Activated B cell treated with CpG ODN at 0.5 μM for 24 hours (primary cell): ENCODE measurements at regions of chr16 and their contacts with region 1.

Region 1: GRCh38 chr16:4734063-4734729 is at the starts of genes ANKS3 and DNAAF8:
- DNase-seq: peak; percentile 84
- ATAC-seq: peak; percentile 77
- H3K4me3 Mint-ChIP-seq: peak within 1 kb of the TSS; percentile 90
- H3K27ac Mint-ChIP-seq: peak within 1 kb of the TSS; percentile 87
- H3K4me1 Mint-ChIP-seq: peaks cover 18% of the 10 kb centered on the region
- H3K27me3 Mint-ChIP-seq: no peaks in the 10 kb centered on the region
- CTCF ChIP-seq: no peak
- total RNA-seq, gene ANKS3: 17.9 and 21.9 TPM in 2 replicates
- total RNA-seq, gene DNAAF8: 0.29 and 0.31 TPM in 2 replicates

Region 2: GRCh38 chr16:4538350-4539235 is 195.6 kb before region 1 on chr16 and contains the start of gene CDIP1:
- CTCF ChIA-PET with region 1: no interaction called
- POLR2A ChIA-PET with region 1: interaction called, 4 read pairs
- intact Hi-C with region 1: loop called (anchors 1 kb)
- DNase-seq: peak; percentile 89
- ATAC-seq: peak; percentile 91
- H3K4me3 Mint-ChIP-seq: peak within 1 kb of the TSS; percentile 76
- H3K27ac Mint-ChIP-seq: peak within 1 kb of the TSS; percentile 73
- H3K4me1 Mint-ChIP-seq: peaks cover 15% of the 10 kb centered on the region
- H3K27me3 Mint-ChIP-seq: peaks cover 1% of the 10 kb centered on the region
- CTCF ChIP-seq: no peak
- total RNA-seq, gene CDIP1: 12.5 and 12.9 TPM in 2 replicates

Region 3: GRCh38 chr16:4624015-4624826 is 110.0 kb before region 1 on chr16 and contains the start of gene MGRN1:
- CTCF ChIA-PET with region 1: interaction called, 3 read pairs
- POLR2A ChIA-PET with region 1: interaction called, 5 read pairs
- intact Hi-C with region 1: loop called (anchors 2 kb)
- DNase-seq: peak; percentile 86
- ATAC-seq: peak; percentile 90
- H3K4me3 Mint-ChIP-seq: peak within 1 kb of the TSS; percentile 99
- H3K27ac Mint-ChIP-seq: peak within 1 kb of the TSS; percentile 100
- H3K4me1 Mint-ChIP-seq: peaks cover 31% of the 10 kb centered on the region
- H3K27me3 Mint-ChIP-seq: no peaks in the 10 kb centered on the region
- CTCF ChIP-seq: peak; percentile 91
- total RNA-seq, gene MGRN1: 69.6 and 88.6 TPM in 2 replicates

Region 4: GRCh38 chr16:4693296-4693955 is 40.8 kb before region 1 on chr16 and contains the start of gene NUDT16L1:
- CTCF ChIA-PET with region 1: interaction called, 5 read pairs
- POLR2A ChIA-PET with region 1: interaction called, 27 read pairs
- intact Hi-C with region 1: loop called (anchors 1 kb)
- DNase-seq: peak; percentile 98
- ATAC-seq: peak; percentile 96
- H3K4me3 Mint-ChIP-seq: peak within 1 kb of the TSS; percentile 85
- H3K27ac Mint-ChIP-seq: peak within 1 kb of the TSS; percentile 69
- H3K4me1 Mint-ChIP-seq: peaks cover 9% of the 10 kb centered on the region
- H3K27me3 Mint-ChIP-seq: no peaks in the 10 kb centered on the region
- CTCF ChIP-seq: no peak
- total RNA-seq, gene NUDT16L1: 32.0 and 32.9 TPM in 2 replicates

Region 5: GRCh38 chr16:4766874-4767628 is 32.9 kb after region 1 on chr16 and contains the start of gene ZNF500:
- CTCF ChIA-PET with region 1: no interaction called
- POLR2A ChIA-PET with region 1: interaction called, 21 read pairs
- intact Hi-C with region 1: loop called (anchors 1 kb)
- DNase-seq: peak; percentile 97
- ATAC-seq: peak; percentile 91
- H3K4me3 Mint-ChIP-seq: peak within 1 kb of the TSS; percentile 93
- H3K27ac Mint-ChIP-seq: peak within 1 kb of the TSS; percentile 91
- H3K4me1 Mint-ChIP-seq: peaks cover 24% of the 10 kb centered on the region
- H3K27me3 Mint-ChIP-seq: no peaks in the 10 kb centered on the region
- CTCF ChIP-seq: no peak
- total RNA-seq, gene ZNF500: 14.3 and 19.1 TPM in 2 replicates

Region 6: GRCh38 chr16:4780235-4780634 is 46.0 kb after region 1 on chr16:
- CTCF ChIA-PET with region 1: no interaction called
- POLR2A ChIA-PET with region 1: no interaction called
- intact Hi-C with region 1: no loop called
- DNase-seq: no peak
- ATAC-seq: no peak
- H3K4me3 Mint-ChIP-seq: no peak overlapping the region
- H3K27ac Mint-ChIP-seq: no peak overlapping the region
- H3K4me1 Mint-ChIP-seq: no peaks in the 10 kb centered on the region
- H3K27me3 Mint-ChIP-seq: peaks cover 3% of the 10 kb centered on the region
- CTCF ChIP-seq: no peak

Region 7: DNA sequence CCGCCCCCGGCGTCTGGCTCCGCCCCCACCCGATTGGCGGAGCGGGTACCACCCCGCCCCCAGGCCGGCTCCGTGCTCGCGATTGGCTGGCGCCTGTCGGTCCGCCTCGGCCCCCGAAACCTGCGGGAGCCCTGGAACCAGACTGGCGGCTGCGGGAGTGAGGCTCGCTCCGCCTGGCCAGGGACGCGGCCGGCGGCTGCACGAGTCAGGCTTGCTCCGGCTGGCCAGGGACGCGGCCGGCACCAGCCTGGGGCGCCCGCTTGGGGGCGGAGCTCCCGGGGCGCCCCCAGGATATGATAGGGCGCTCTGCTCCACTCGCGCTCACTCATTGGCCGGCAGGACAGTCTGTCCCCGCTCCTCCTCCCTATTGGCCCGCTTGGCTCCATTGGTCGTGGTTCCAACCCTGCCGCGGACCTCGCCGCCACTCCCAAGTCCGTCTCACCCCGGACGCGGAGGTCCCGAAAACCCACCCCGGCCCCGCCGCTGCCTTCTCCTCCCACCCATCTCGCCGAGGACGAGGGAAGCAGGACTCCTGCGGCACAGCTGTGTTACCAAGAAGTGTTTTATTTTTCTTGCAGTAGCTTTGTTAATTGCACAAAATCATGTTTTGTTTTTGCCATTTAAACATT is 68.6 kb after region 1 on chr16:
- CTCF ChIA-PET with region 1: interaction called, 3 read pairs
- POLR2A ChIA-PET with region 1: interaction called, 21 read pairs
- intact Hi-C with region 1: loop called (anchors 1 kb)
- DNase-seq: peak; percentile 97
- ATAC-seq: peak; percentile 88
- H3K4me3 Mint-ChIP-seq: peak overlapping the region; percentile 86
- H3K27ac Mint-ChIP-seq: peak overlapping the region; percentile 69
- H3K4me1 Mint-ChIP-seq: peaks cover 25% of the 10 kb centered on the region
- H3K27me3 Mint-ChIP-seq: no peaks in the 10 kb centered on the region
- CTCF ChIP-seq: no peak

Region 8: DNA sequence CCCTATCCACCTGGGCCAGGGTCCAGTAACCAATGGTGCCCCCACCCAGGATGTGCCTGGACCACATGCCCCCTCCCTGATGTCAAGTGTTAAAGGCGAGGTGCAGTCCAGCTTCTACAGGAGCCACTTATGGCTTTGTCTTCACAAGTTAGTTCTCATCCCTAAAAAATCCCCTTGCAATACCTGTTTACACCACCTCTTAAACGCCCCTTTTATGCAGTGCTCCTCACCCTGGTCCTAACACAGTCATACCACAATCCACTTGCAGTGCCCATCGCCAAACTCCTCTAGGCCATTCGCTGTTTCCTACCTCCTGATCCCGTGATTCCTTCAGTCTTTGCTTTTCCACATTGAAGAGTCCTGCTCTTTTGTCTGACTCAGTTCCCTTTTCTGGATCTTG is 105.7 kb after region 1 on chr16:
- CTCF ChIA-PET with region 1: no interaction called
- POLR2A ChIA-PET with region 1: no interaction called
- intact Hi-C with region 1: no loop called
- DNase-seq: no peak
- ATAC-seq: no peak
- H3K4me3 Mint-ChIP-seq: no peak overlapping the region
- H3K27ac Mint-ChIP-seq: no peak overlapping the region
- H3K4me1 Mint-ChIP-seq: peaks cover 4% of the 10 kb centered on the region
- H3K27me3 Mint-ChIP-seq: no peaks in the 10 kb centered on the region
- CTCF ChIP-seq: no peak

Region 9: DNA sequence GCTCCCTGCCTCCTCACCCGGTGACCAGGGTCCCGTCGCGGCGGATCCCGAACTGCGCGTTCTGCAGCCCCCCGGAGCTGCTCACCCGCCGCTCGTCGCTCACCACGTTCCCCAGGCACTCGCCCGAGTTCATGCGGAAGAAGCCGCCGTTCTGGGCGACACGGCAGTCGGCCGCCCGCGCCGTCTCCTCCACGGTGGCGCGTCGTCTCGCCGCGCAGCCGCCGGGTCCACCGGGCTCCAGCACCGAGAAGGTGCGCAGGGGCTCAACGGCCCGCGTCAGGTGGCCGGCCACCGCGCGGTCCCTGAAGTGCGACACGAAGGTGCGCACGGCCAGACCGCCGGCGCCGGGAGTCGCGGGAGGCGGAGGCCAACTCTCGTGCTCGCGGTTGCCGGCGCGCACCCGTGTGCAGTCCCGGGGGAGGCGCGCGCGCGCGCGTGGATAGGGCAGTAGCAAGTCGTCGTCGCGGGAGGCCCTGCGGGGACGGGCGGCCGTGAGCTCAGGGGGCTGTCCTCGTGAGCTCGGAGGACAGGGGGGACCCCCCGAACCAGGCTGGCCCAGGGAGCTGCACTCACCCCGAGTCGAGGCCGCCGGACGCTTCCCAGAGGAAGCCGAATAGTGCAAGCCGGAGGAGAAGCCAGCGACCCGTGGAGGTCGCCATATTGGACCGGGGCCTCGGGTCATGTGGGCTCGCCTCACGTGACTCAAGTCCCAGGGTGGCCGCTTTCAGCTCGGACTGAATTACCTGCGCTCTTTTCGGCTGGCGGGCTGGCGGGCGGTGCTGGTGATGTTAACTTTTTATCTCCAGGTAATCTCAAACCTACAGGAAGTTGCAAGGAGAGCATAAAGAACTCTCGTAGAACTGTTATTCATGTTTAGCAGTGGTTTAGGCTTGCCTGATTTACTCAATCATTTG is 299.3 kb after region 1 on chr16 and contains the start of gene NAGPA:
- CTCF ChIA-PET with region 1: no interaction called
- POLR2A ChIA-PET with region 1: no interaction called
- intact Hi-C with region 1: loop called (anchors 1 kb)
- DNase-seq: peak; percentile 82
- ATAC-seq: peak; percentile 87
- H3K4me3 Mint-ChIP-seq: peak within 1 kb of the TSS; percentile 87
- H3K27ac Mint-ChIP-seq: peak within 1 kb of the TSS; percentile 91
- H3K4me1 Mint-ChIP-seq: peaks cover 18% of the 10 kb centered on the region
- H3K27me3 Mint-ChIP-seq: no peaks in the 10 kb centered on the region
- CTCF ChIP-seq: no peak
- total RNA-seq, gene NAGPA: 23.8 and 24.2 TPM in 2 replicates

Region 10: GRCh38 chr16:5479926-5480325 is 745.7 kb after region 1 on chr16:
- CTCF ChIA-PET with region 1: no interaction called
- POLR2A ChIA-PET with region 1: no interaction called
- intact Hi-C with region 1: no loop called
- DNase-seq: no peak
- ATAC-seq: no peak
- H3K4me3 Mint-ChIP-seq: no peak overlapping the region
- H3K27ac Mint-ChIP-seq: no peak overlapping the region
- H3K4me1 Mint-ChIP-seq: no peaks in the 10 kb centered on the region
- H3K27me3 Mint-ChIP-seq: no peaks in the 10 kb centered on the region
- CTCF ChIP-seq: no peak